HEK293 (cell line): ENCODE measurements at regions of chr21 and their contacts with region 1.

Region 1: DNA sequence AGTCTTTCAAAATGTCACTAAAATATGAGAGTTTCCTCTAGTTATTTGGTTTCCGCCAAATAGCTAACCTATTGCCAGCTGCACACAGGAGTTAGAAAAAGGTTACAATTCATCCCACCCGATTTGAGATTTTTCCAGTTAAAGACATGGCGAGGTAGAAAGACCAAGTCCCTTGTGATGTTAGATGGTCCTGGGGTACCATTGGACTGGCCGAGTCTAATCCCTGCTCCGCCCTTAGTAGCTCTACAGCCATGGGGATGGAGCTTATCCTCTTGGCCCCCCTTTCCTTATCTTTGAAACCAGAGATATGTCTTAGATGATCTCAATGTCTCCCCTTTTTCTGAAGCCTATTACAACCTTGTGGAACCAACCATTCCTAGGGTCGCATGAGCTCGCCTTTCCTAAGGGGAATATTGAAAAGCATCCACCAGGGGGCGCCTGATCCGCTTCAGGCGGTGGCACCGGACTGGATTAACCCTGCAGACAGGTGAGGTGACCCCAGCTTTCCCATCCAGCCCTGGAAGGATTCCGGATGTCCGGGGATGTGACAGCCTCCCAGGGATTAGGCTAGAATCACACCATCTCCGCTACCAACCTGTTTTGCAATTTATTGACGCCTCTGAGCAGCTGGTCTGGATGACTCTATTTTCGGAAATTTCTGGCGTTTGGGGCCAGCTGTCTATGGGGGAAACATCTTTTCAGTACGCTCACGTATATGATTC is 68.3 kb upstream of the SIM2 start:
- H3K4me3 ChIP-seq: no peak overlapping the region
- H3K27ac ChIP-seq: no peak overlapping the region
- H3K4me1 ChIP-seq: no peaks in the 10 kb centered on the region
- CTCF ChIP-seq: peak; percentile 56

Region 2: GRCh38 chr21:36606287-36606982 is 24.2 kb before region 1 on chr21:
- CTCF ChIA-PET with region 1: interaction called, 29 read pairs
- POLR2A ChIA-PET with region 1: no interaction called
- H3K4me3 ChIP-seq: no peak overlapping the region
- H3K27ac ChIP-seq: no peak overlapping the region
- H3K4me1 ChIP-seq: no peaks in the 10 kb centered on the region
- CTCF ChIP-seq: no peak

Region 3: GRCh38 chr21:36647279-36648093 is 16.8 kb after region 1 on chr21:
- CTCF ChIA-PET with region 1: interaction called, 60 read pairs
- POLR2A ChIA-PET with region 1: interaction called, 3 read pairs
- H3K4me3 ChIP-seq: no peak overlapping the region
- H3K27ac ChIP-seq: no peak overlapping the region
- H3K4me1 ChIP-seq: no peaks in the 10 kb centered on the region
- CTCF ChIP-seq: no peak

Region 4: DNA sequence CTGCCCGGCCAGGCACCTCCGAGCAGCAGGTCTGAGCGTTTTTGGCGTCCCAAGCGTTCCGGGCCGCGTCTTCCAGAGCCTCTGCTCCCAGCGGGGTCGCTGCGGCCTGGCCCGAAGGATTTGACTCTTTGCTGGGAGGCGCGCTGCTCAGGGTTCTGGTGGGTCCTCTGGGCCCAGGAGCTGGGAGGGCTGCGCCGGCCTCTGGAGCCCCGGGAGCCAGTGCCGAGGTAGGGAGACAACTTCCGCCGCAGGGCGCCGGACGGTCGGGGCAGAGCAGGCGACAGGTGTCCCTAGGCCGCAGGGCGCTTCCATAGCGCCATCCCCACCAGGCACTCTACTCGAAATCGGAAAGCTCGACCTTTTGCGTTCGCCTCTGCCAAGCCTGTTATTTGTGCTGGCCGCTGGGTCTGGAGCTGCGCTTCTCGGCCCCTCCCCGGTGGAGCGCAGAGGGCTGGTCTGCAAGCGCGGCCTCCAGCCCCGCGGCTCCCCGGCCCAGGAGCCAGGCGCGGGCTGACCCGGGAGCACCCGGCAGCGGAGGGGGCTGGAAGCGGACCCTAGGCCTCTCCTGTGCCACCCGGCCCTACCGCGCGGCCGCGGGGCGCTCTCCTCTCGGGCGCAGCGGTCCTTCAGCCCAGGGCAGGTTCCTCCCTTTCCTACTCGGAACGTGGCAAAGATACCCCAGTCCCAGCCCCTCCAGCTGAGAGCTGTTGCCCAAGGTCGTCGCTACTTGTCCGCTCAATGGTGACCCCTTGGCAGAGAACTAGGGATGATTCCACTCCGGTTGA is 70.5 kb after region 1 on chr21:
- CTCF ChIA-PET with region 1: interaction called, 12 read pairs
- POLR2A ChIA-PET with region 1: no interaction called
- H3K4me3 ChIP-seq: peak overlapping the region; percentile 73
- H3K27ac ChIP-seq: peak overlapping the region; percentile 91
- H3K4me1 ChIP-seq: peaks cover 4% of the 10 kb centered on the region; the same call in 1 of the 2 replicates
- CTCF ChIP-seq: peak; percentile 79

Region 5: DNA sequence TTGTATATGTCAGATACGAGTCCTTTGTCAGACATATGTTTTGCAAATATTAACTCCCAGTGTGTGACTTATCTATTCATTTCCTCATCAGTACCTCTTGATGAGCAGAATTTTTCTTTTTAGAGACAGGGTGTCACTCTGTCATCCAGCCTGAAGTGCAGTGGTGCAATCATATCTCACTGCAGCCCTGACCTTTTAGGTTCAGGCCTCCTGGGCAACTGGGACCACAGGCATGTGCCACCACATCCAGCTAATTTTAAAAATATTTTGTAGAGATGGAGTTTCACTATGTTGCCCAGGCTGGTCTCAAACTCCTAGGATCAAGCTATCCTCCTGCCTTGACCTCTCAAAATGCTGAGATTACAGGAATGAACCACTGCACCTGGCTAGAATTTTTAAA is 242.9 kb after region 1 on chr21:
- CTCF ChIA-PET with region 1: no interaction called
- POLR2A ChIA-PET with region 1: no interaction called
- H3K4me3 ChIP-seq: no peak overlapping the region
- H3K27ac ChIP-seq: no peak overlapping the region
- H3K4me1 ChIP-seq: no peaks in the 10 kb centered on the region
- CTCF ChIP-seq: no peak

Region 6: DNA sequence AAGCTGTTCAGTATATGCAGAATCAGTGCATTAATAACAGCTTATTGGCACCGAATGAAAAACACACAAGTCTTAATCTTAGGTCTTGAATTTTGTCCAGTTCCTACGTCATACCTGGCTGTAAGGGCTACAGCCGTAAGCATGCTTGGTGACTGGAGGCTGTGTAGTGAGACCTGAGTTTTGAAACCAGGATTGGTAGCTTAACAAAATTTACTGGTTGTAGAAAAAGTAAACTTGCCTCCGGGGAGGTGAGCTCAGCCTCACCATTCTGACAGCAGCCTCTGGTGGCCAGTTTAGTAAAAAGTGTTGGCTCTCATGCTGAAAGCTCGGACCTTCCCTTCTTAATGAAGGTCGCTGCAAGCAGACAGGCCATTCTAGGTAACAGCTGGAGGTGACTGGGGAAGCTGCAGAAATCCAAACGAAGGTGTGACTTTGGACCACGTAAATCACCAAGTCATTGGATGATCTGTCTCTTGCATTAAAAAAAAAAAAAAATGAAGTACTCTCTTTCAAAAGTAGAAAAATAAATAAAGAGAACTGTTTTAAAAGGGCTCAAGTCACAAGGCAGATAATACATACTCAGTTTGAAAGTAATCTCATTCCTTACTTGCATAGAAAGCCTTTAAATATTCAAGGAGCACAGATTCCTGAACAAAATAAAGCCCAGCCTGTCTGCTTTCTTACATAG is 287.0 kb after region 1 on chr21:
- CTCF ChIA-PET with region 1: interaction called, 25 read pairs
- POLR2A ChIA-PET with region 1: no interaction called
- H3K4me3 ChIP-seq: no peak overlapping the region
- H3K27ac ChIP-seq: no peak overlapping the region; the same call in 1 of the 2 replicates
- H3K4me1 ChIP-seq: peaks cover 25% of the 10 kb centered on the region
- CTCF ChIP-seq: peak; percentile 76